Activated CD4-positive, alpha-beta T cell treated with anti-CD3 and anti-CD28 coated beads for 36 hours (primary cell): ENCODE measurements at regions of chr10 and their contacts with region 1.

Region 1: DNA sequence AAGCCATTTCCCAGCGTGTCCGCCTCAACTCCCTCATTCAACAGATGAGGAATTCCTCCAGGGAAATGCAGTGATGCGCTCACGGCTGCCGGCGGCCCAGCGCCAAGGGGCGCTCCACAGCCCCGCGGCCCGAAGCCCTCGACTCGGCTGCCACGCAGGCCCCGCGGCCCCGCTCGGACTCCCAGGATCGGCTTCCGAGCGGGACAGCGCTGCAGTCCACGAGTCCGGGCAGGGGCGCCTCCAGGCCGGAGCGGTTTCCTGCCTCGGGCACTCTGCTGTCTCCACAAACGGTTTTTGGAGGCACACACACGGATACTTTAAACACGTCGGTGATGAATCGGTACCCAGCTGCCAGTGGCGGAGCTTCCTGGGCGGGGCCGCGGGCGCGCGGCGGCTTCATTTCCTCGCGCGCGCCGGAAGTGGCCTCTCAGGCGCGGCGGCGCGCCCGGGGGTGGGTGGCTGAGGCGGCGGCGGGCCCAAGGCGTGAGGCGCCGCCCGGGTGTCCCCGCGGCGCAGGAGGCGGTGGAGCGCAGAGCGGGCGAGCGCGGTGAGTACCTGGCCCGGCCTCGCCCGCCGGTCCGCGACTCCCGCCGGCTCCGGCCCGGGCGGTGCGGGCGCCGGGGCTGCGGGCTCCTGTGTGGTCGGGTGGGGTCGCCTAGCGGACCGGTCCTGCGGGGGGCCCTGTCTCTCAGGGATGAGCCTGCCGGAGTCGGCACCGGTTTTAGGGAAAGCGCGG is at the start of gene CSGALNACT2:
- DNase-seq: peak; percentile 94
- ATAC-seq: peak; percentile 69
- H3K4me3 Mint-ChIP-seq: peak within 1 kb of the TSS; percentile 95
- H3K27ac Mint-ChIP-seq: peak within 1 kb of the TSS; percentile 98
- H3K4me1 Mint-ChIP-seq: peaks cover 48% of the 10 kb centered on the region
- H3K27me3 Mint-ChIP-seq: no peaks in the 10 kb centered on the region
- total RNA-seq, gene CSGALNACT2: 19.3 to 19.5 TPM

Region 2: GRCh38 chr10:42782446-42783180 is 355.6 kb before region 1 on chr10 and contains the start of gene BMS1:
- CTCF ChIA-PET with region 1: no interaction called
- POLR2A ChIA-PET with region 1: no interaction called
- intact Hi-C with region 1: loop called in 1 of 2 experiments (anchors 1 kb)
- DNase-seq: peak; percentile 94
- ATAC-seq: peak; percentile 87
- H3K4me3 Mint-ChIP-seq: peak within 1 kb of the TSS; percentile 90
- H3K27ac Mint-ChIP-seq: peak within 1 kb of the TSS; percentile 93
- H3K4me1 Mint-ChIP-seq: peaks cover 30% of the 10 kb centered on the region
- H3K27me3 Mint-ChIP-seq: no peaks in the 10 kb centered on the region
- total RNA-seq, gene BMS1: 26.5 to 30.4 TPM

Region 3: DNA sequence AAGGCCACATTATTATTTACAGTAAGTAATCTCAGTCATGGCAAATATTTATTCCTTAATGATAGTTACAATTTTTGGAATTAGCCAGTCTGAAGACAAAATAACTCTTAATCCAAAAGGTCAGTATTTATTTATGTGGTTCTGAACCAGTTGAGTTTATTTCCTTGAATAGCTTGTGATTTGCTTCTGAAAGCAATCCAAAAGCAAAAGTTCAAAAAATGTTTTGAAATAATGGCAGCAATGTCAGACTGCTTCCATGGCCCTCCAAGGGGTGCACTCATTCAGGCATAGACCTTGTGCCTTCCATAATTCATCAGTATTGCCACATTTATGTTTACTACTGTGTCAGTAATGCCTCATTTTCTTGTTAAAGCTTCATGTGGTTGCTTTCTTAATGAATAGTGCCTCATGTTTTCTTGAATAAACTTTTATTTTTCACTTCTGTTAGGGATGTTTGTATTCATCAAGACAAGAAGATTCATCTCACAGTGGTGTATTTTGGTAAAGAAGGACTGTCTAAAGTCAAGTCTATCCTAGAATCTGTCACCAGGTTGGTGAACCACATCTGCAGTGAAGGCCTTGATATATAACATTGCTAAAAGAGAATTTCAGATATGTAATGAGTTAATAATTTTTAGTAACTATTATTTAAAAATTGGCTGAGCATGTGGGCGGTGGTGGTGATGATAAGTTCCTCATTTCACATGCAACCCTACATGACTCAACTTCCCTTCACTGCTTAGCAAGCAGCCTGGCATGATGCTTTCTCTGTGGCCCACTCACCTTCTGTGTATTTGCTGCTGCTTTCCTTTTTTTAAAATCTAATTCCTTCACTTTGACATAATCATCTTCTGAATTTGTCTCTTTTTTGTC is 22.1 kb after region 1 on chr10:
- CTCF ChIA-PET with region 1: interaction called, 11 read pairs
- POLR2A ChIA-PET with region 1: interaction called, 16 read pairs
- intact Hi-C with region 1: loop called (anchors 1 kb)
- DNase-seq: peak; percentile 68
- ATAC-seq: peak; percentile 86
- H3K4me3 Mint-ChIP-seq: peak overlapping the region; percentile 22
- H3K27ac Mint-ChIP-seq: peak overlapping the region; percentile 94
- H3K4me1 Mint-ChIP-seq: peaks cover 59% of the 10 kb centered on the region
- H3K27me3 Mint-ChIP-seq: no peaks in the 10 kb centered on the region

Region 4: DNA sequence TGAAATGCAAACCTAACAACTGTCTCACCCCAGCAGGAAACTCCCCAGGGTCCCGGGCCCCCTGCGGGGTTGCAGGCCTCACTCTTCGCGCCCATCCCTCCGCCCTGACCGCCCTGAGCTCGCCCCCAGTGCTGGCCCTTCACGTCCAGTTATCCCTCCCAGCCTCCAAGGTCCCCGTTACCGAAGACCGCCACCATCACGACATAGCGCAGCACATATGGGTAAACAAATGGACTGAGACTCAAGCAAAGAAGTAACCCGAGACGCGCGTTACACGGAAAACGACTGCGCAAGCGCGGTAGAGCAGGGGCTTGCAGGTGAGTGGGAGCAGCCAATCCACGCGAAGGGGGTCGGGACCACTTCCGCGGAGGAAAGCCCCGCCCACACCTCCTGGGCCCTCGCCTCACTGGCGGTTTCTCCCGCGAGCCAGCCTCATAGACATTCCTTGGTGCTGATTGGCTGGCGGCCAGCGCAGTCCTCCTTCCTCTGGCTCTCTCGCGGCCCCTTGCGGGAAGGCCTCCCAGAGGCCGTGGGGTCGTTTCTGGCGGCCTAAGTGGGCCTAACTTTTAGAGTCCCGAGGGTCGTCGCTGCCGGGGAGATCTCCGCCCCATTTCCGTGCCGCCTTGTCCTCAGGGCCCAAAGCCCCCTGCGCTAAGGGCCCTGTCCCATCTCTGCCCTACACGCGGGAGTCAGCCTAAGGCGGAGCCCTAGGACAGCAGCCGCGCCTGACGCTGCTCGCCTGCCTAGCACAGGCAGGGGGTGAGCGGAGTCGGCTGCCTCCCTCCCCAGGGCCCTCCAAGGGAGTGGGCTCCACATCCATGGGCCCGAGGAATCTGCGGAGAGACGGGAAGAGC is 224.0 kb after region 1 on chr10:
- CTCF ChIA-PET with region 1: no interaction called
- POLR2A ChIA-PET with region 1: no interaction called
- intact Hi-C with region 1: loop called in 1 of 2 experiments (anchors 2 kb)
- DNase-seq: peak; percentile 99
- ATAC-seq: peak; percentile 96
- H3K4me3 Mint-ChIP-seq: peak overlapping the region; percentile 95
- H3K27ac Mint-ChIP-seq: peak overlapping the region; percentile 98
- H3K4me1 Mint-ChIP-seq: peaks cover 22% of the 10 kb centered on the region
- H3K27me3 Mint-ChIP-seq: no peaks in the 10 kb centered on the region

Region 5: GRCh38 chr10:43436400-43437140 is 298.4 kb after region 1 on chr10 and contains the start of gene ZNF487:
- CTCF ChIA-PET with region 1: no interaction called
- POLR2A ChIA-PET with region 1: no interaction called
- intact Hi-C with region 1: loop called in 1 of 2 experiments (anchors 5 kb)
- DNase-seq: peak; percentile 92
- ATAC-seq: peak; percentile 97
- H3K4me3 Mint-ChIP-seq: peak within 1 kb of the TSS; percentile 98
- H3K27ac Mint-ChIP-seq: peak within 1 kb of the TSS; percentile 95
- H3K4me1 Mint-ChIP-seq: peaks cover 17% of the 10 kb centered on the region
- H3K27me3 Mint-ChIP-seq: no peaks in the 10 kb centered on the region
- total RNA-seq, gene ZNF487: 1.8 to 2.3 TPM